ENCODE measurements at regions of chr7 and their contacts with region 1.

Region 1: GRCh38 chr7:92590711-92591310 is 621 bp upstream of the FAM133B start:
- H3K4me3 ChIP-seq: peak overlapping the region; percentile 96
- H3K27ac ChIP-seq: no peak overlapping the region
- H3K4me1 ChIP-seq: peaks cover 9% of the 10 kb centered on the region
- CTCF ChIP-seq: no peak

Region 2: GRCh38 chr7:92528188-92528957 is 62.4 kb before region 1 on chr7 and contains the starts of genes PEX1 and RBM48:
- CTCF ChIA-PET with region 1: no interaction called
- POLR2A ChIA-PET with region 1: interaction called, 18 read pairs
- H3K4me3 ChIP-seq: peak within 1 kb of the TSS; percentile 72
- H3K27ac ChIP-seq: peak within 1 kb of the TSS; percentile 82
- H3K4me1 ChIP-seq: peaks cover 7% of the 10 kb centered on the region; the same call in 1 of the 2 replicates
- CTCF ChIP-seq: peak; percentile 85

Region 3: GRCh38 chr7:92833024-92833765 is 242.4 kb after region 1 on chr7:
- CTCF ChIA-PET with region 1: no interaction called
- POLR2A ChIA-PET with region 1: interaction called, 14 read pairs
- H3K4me3 ChIP-seq: peak overlapping the region; percentile 80
- H3K27ac ChIP-seq: peak overlapping the region; percentile 96
- H3K4me1 ChIP-seq: 0 out of 2 replicates have a peak, but pooled peaks cover 7% of the 10 kb centered on the region
- CTCF ChIP-seq: peak; percentile 95

Measured in HEK293 (cell line).